ENCODE measurements at regions of chr22 and their contacts with region 1.

Region 1: DNA sequence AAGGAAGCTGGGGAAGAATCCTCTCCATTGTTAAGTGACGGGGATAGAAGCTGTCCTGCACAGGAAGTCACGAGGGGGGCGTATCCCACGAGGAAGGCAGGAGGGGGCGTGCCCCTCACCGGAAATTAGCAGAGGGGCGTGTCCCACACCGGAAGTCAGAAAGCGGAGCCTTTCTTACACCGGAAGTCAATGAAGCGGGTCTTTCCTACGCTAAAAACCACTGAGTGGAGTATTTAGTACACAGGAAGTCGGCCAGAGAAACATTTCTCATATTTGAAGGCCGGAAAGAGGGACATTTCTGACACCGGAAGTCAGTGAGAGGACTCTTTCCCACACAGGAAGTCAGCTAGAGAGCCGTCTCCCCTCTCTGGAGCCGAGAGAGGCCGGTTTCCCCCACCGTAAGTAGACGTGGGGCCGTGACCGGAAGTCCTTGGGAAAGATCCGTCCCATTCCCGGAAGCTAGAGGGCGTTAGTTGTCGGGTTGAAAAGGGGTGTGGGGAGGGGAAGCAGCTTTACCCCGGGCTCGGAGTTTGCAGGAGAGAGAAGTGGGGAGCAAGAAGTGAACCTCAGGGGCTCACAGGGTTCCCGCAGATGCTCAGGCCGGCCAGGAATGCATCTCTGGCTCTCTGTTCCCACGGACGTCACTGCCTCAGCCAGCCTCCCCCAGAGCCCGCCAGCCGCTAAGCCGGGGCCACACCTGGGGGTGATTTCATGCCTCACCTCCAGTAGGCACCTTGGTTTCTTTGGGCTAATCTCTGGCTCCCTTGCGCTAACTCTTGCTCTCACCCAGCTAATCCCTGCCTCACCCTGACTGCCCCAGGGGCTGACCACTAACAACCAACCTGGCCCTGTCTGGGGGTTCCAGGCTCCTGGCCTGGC is 15.4 kb downstream of the MIAT start:
- DNase-seq: peak; percentile 97
- H3K4me3 Mint-ChIP-seq: peak overlapping the region; percentile 90
- H3K27ac Mint-ChIP-seq: peak overlapping the region; percentile 100
- H3K4me1 Mint-ChIP-seq: peaks cover 77% of the 10 kb centered on the region
- H3K27me3 Mint-ChIP-seq: no peaks in the 10 kb centered on the region

Region 2: GRCh38 chr22:26122920-26123468 is 549.8 kb before region 1 on chr22:
- CTCF ChIA-PET with region 1: no interaction called
- POLR2A ChIA-PET with region 1: no interaction called
- DNase-seq: no peak
- H3K4me3 Mint-ChIP-seq: no peak overlapping the region
- H3K27ac Mint-ChIP-seq: no peak overlapping the region
- H3K4me1 Mint-ChIP-seq: no peaks in the 10 kb centered on the region
- H3K27me3 Mint-ChIP-seq: peaks cover 2% of the 10 kb centered on the region

Region 3: GRCh38 chr22:26428515-26429457 is 244.0 kb before region 1 on chr22 and contains the start of gene ASPHD2:
- CTCF ChIA-PET with region 1: interaction called, 7 read pairs
- POLR2A ChIA-PET with region 1: interaction called, 45 read pairs
- DNase-seq: peak; percentile 82
- H3K4me3 Mint-ChIP-seq: peak within 1 kb of the TSS; percentile 93
- H3K27ac Mint-ChIP-seq: peak within 1 kb of the TSS; percentile 97
- H3K4me1 Mint-ChIP-seq: peaks cover 50% of the 10 kb centered on the region
- H3K27me3 Mint-ChIP-seq: peaks cover 10% of the 10 kb centered on the region
- total RNA-seq, gene ASPHD2: 11.8 to 12.7 TPM

Region 4: DNA sequence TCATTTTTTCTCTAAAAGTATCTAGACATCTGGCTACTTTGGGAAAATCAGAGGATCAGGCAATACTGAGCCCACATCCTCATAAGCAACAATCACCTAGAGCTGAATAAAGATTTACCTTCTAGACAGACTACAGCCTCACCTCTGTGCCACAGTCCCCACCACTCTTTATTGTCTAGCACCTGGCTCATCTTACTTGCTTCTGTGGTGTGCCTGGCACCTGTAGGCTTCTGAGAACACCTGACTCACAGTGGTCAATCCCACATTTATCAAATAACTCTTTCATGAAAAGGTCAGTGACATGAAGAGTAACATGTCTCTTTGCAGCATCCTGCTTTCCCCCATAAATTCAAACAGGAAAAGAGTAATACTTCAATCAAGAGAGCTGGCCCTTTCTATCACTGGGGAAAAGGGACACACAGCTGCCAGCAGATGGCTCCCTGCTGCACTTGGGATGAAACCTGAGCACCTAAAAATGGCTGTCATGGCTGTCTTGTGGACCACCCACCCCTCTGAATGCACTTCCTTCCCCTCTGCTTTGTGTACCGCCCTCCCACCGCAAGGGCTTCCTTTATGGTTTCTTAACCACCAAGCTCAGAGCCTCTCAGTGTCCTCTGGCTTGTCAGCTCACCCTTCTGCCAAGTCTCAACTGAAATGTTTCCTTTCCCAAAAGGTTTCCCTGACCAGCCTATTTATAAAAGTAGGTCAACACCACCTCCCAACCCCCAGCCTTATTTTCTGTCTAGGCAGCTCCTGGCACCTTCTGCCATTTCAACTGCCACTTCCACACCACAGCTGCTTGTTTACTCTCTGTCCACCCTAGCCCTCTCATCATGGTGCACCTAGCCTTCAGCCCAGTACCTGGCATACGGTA is 169.9 kb before region 1 on chr22:
- CTCF ChIA-PET with region 1: interaction called, 41 read pairs
- POLR2A ChIA-PET with region 1: interaction called, 20 read pairs
- DNase-seq: peak; percentile 89
- H3K4me3 Mint-ChIP-seq: peak overlapping the region; percentile 44
- H3K27ac Mint-ChIP-seq: peak overlapping the region; percentile 94
- H3K4me1 Mint-ChIP-seq: peaks cover 39% of the 10 kb centered on the region
- H3K27me3 Mint-ChIP-seq: no peaks in the 10 kb centered on the region

Region 5: DNA sequence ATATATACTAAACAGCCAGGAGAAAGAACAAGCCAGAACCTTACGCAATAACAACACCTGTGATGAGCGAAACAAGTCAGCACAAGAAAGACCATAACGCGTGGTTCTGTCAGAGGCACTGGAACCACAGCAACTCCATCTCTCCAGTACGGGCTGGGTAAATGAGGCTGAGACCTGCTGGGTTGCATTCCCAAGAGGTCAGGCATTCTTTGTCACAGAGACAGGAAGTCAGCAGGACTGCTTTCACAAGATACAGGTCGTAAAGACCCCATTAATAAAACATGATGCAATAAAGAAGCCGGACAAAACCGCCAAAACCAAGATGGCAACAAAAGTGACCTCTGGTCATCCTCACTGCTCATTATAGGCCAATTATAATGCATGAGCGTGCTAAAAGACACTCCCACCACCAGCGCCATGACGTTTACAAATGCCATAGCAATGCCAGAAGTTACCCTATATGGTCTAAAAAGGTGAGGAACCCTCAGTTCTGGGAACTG is 104.6 kb before region 1 on chr22:
- CTCF ChIA-PET with region 1: no interaction called
- POLR2A ChIA-PET with region 1: no interaction called
- DNase-seq: no peak
- H3K4me3 Mint-ChIP-seq: no peak overlapping the region
- H3K27ac Mint-ChIP-seq: no peak overlapping the region
- H3K4me1 Mint-ChIP-seq: peaks cover 59% of the 10 kb centered on the region
- H3K27me3 Mint-ChIP-seq: no peaks in the 10 kb centered on the region

Region 6: GRCh38 chr22:26579331-26579886 is 93.4 kb before region 1 on chr22:
- CTCF ChIA-PET with region 1: no interaction called
- POLR2A ChIA-PET with region 1: interaction called, 10 read pairs
- DNase-seq: peak; percentile 79
- H3K4me3 Mint-ChIP-seq: peak overlapping the region; percentile 58
- H3K27ac Mint-ChIP-seq: peak overlapping the region; percentile 88
- H3K4me1 Mint-ChIP-seq: peaks cover 63% of the 10 kb centered on the region
- H3K27me3 Mint-ChIP-seq: no peaks in the 10 kb centered on the region

Region 7: GRCh38 chr22:26592421-26592891 is 80.4 kb before region 1 on chr22:
- CTCF ChIA-PET with region 1: no interaction called
- POLR2A ChIA-PET with region 1: interaction called, 13 read pairs
- DNase-seq: peak; percentile 80
- H3K4me3 Mint-ChIP-seq: peak overlapping the region; percentile 45
- H3K27ac Mint-ChIP-seq: peak overlapping the region; percentile 82
- H3K4me1 Mint-ChIP-seq: peaks cover 69% of the 10 kb centered on the region
- H3K27me3 Mint-ChIP-seq: peaks cover 4% of the 10 kb centered on the region

Region 8: DNA sequence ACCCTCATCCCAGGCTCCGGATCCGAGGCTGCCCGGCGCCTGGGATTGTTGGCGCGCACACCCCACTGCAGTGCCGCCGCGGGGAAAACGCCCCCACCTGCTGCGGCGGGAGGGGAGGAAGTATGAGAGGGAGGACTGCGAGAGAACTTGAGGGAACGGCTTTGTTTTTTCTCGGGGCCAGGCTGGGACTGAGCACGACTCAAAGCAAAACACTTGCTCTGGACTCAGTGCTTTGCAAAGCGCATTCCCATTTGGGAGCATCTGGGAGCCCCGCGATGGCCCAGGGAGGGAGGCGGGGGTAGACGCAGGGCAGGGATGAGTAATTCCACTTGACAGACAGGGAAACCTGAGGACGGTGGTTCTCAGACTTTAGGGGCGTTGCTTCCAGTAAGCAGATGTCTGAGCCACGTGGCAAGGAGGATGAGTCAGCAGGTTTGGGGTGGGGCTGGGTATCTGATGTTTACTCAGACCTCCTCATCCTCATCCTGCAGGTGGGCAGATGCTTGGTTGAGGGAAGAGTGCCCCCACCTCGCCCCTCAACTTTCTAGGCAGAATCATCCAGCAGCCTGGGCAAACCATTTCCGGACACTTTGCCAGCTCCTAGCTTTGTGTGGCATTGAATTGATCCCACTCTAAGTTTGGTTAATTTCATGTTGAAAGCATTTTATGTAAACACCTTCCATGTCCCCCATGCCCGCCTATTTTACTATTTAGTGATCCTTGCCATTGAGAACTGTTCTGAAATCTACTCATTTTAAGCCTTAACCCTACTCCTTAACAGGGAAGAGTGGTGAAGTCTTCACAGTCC is 14.0 kb before region 1 on chr22:
- CTCF ChIA-PET with region 1: interaction called, 15 read pairs
- POLR2A ChIA-PET with region 1: interaction called, 117 read pairs
- DNase-seq: peak; percentile 88
- H3K4me3 Mint-ChIP-seq: peak overlapping the region; percentile 96
- H3K27ac Mint-ChIP-seq: peak overlapping the region; percentile 88
- H3K4me1 Mint-ChIP-seq: peaks cover 48% of the 10 kb centered on the region
- H3K27me3 Mint-ChIP-seq: peaks cover 12% of the 10 kb centered on the region

Region 9: GRCh38 chr22:27124351-27124966 is 451.6 kb after region 1 on chr22:
- CTCF ChIA-PET with region 1: no interaction called
- POLR2A ChIA-PET with region 1: no interaction called
- DNase-seq: no peak
- H3K4me3 Mint-ChIP-seq: no peak overlapping the region
- H3K27ac Mint-ChIP-seq: no peak overlapping the region
- H3K4me1 Mint-ChIP-seq: no peaks in the 10 kb centered on the region
- H3K27me3 Mint-ChIP-seq: peaks cover 8% of the 10 kb centered on the region